Keratinocyte (primary cell): ENCODE measurements at regions of chr15 and their contacts with region 1.

Region 1: DNA sequence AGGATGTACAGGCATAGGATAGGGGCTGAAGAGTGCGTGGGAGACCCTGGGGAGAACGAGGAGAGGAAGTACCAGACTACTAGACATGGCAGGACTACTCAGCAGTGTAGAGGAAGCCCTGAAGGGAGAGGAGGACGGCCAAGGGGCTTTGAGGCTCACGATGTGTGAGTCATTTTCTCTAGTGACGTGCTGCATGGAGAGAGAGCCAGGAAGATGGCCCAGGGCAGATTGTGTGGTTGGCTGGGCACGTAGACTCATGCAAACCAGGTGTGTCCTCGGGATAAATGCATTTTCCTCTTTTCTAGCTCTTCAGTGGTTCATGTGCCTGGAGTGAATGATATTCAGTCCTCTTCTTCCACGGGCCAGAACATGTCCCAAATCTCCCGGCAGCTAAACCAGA is 115.0 kb upstream of the ABHD17C start:
- DNase-seq: peak; percentile 99
- H3K4me3 ChIP-seq: peak overlapping the region in 1 of 3 experiments; percentile 16
- H3K27ac ChIP-seq: peak overlapping the region; percentile 94
- H3K4me1 ChIP-seq: peaks cover 42% of the 10 kb centered on the region
- H3K27me3 ChIP-seq: no peaks in the 10 kb centered on the region
- CTCF ChIP-seq: no peak

Region 2: GRCh38 chr15:80695104-80695910 is 115.2 kb after region 1 on chr15 and contains the start of gene ABHD17C:
- dilution Hi-C with region 1: loop called (anchors 25 kb)
- DNase-seq: no peak
- H3K4me3 ChIP-seq: peak within 1 kb of the TSS; percentile 84 to 89 (median 85)
- H3K27ac ChIP-seq: peak within 1 kb of the TSS; percentile 76
- H3K4me1 ChIP-seq: peaks cover 31% of the 10 kb centered on the region
- H3K27me3 ChIP-seq: no peaks in the 10 kb centered on the region
- CTCF ChIP-seq: no peak
- polyA plus RNA-seq, gene ABHD17C: 11.8 to 27.8 TPM (median 23.3 TPM) in 3 replicates